Activated CD4-positive, alpha-beta T cell treated with anti-CD3 and anti-CD28 coated beads, Interleukin-2, amount 10 ng/mL, durations not matched to agents 24 days and 14 days (primary cell): ENCODE measurements at regions of chr19 and their contacts with region 1.

Region 1: DNA sequence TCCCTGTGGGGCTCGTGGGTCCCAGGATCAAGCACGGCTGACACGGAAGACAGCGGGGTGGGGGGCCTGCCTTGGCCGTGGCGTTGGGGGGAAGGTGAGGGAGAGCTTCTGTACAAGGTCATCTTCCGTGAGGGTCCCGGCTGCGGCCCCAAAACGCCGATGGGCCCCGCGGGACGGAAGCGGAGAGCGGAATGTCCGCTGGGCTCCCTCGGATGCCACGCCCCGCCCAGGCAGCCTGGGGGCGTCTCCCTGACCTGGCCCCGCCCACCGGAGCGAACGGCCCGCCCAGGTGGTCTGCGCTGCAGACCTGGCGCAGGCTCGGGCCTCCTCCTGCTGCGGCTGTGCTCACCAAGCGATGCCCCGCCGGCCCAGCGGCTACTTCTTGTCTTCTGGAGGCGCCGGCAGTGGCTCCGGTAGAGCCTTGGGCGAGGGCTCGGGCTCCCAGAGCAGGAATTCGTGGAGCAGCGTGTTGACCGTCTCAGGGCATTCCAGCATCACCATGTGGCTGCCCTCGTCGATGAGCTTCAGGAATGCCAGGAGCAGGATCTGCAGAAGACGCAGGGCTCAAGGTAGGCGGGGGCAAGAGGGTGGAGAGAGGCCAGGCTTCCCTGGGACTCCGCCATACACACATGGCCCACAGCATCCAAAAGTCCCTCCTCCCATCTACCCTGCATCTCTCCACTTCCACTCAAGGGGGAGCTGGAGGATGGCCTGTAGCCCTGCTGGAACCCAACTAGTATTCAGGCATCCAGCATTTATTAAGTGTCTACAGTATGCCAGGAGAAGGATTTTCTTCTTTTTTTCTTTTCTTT is 10.7 kb downstream of the ABHD8 start:
- DNase-seq: peak; percentile 95
- H3K4me3 Mint-ChIP-seq: peak overlapping the region; percentile 92
- H3K27ac Mint-ChIP-seq: peak overlapping the region; percentile 89
- H3K4me1 Mint-ChIP-seq: peaks cover 3% of the 10 kb centered on the region
- H3K27me3 Mint-ChIP-seq: peaks cover 7% of the 10 kb centered on the region

Region 2: GRCh38 chr19:17336872-17337722 is 44.6 kb after region 1 on chr19 and contains the start of gene GTPBP3:
- intact Hi-C with region 1: loop called (anchors 1 kb)
- DNase-seq: peak; percentile 99
- H3K4me3 Mint-ChIP-seq: peak within 1 kb of the TSS; percentile 99
- H3K27ac Mint-ChIP-seq: peak within 1 kb of the TSS; percentile 94
- H3K4me1 Mint-ChIP-seq: peaks cover 30% of the 10 kb centered on the region
- H3K27me3 Mint-ChIP-seq: no peaks in the 10 kb centered on the region
- total RNA-seq, gene GTPBP3: 69.9 and 70.3 TPM in 2 replicates